Gastrocnemius medialis (tissue), 4 donors: ENCODE measurements at regions of chr20 and their contacts with region 1.

Region 1: DNA sequence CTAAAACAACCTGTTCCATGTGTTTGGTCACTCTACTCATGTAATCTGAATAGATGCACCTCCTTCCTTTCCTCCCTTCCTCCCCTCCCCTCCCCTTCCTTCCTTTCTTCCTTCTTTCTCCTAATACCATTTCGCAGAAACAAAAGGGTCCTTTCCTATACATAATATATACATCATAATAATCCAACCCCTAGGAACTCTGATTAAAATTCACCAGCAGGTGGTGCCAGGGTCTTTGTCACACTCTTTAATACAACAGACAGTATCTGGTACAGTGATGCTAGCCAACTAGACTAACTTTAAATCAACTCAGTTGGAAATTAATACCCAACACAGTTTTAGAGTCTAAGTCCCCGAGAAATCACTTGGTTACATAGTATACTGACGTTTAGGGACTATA is 181.2 kb upstream of the SHLD1 start:
- DNase-seq: no peak
- ATAC-seq: peak in 1 of 2 donors; percentile 61
- H3K4me3 ChIP-seq: no peak overlapping the region
- H3K27ac ChIP-seq: no peak overlapping the region
- H3K4me1 ChIP-seq: no peaks in the 10 kb centered on the region
- H3K27me3 ChIP-seq: no peaks in the 10 kb centered on the region
- CTCF ChIP-seq: peak; percentile 26 to 56 (median 34)
- POLR2A ChIP-seq: no peak

Region 2: DNA sequence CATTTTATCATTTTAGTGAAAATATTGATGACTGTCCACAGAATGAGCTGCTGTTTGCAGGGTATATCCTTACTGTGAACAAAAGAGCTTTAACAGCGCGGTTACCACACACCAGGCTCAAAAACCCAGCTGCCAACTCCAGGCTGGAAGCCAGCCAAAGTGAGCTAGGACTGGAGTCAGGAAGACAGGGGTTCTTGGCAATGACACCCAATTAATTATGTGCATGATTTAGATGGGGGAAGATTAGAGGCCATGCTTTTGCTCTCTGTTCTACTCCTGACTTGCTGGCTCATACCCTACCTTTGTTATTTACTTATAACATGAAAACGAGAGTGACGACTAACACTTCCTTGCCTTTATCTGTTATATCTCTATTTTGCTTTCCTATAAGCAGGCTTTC is 52.3 kb after region 1 on chr20:
- in situ Hi-C with region 1: no loop called
- intact Hi-C with region 1: no loop called
- DNase-seq: no peak
- ATAC-seq: no peak
- H3K4me3 ChIP-seq: no peak overlapping the region
- H3K27ac ChIP-seq: no peak overlapping the region
- H3K4me1 ChIP-seq: no peaks in the 10 kb centered on the region
- H3K27me3 ChIP-seq: no peaks in the 10 kb centered on the region
- CTCF ChIP-seq: no peak
- POLR2A ChIP-seq: no peak

Region 3: DNA sequence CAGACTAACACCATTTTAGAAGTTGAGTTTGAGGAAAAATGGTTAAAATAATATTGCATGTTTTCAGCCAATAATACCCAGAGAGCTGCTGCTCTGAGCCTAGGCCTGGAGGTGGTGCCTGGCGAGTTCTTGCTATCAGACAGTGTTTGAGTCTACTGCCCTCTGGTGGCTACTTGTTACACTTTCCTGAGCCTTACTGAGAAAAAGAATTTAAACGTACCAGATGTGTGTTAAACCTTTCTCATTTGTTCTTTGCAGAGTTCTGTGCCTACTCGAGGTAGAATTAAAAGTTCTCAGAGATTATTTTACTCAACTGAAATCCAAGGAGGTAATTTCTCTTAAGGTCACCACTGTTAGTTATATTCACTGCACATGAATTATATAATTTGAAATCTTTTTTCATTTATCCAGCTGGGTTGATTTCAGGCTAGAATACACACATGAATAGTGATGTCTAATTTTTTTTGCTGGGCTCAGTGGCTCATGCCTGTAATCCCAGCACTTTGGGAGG is 219.4 kb after region 1 on chr20:
- in situ Hi-C with region 1: loop called in 3 of 4 experiments (anchors 5 to 25 kb)
- intact Hi-C with region 1: no loop called
- DNase-seq: peak; percentile 74 to 75
- ATAC-seq: peak; percentile 76 to 84
- H3K4me3 ChIP-seq: no peak overlapping the region
- H3K27ac ChIP-seq: no peak overlapping the region
- H3K4me1 ChIP-seq: peaks cover 16 to 24% of the 10 kb centered on the region in 2 donors
- H3K27me3 ChIP-seq: no peaks in the 10 kb centered on the region
- CTCF ChIP-seq: peak; percentile 86 to 93 (median 89)
- POLR2A ChIP-seq: no peak

Region 4: DNA sequence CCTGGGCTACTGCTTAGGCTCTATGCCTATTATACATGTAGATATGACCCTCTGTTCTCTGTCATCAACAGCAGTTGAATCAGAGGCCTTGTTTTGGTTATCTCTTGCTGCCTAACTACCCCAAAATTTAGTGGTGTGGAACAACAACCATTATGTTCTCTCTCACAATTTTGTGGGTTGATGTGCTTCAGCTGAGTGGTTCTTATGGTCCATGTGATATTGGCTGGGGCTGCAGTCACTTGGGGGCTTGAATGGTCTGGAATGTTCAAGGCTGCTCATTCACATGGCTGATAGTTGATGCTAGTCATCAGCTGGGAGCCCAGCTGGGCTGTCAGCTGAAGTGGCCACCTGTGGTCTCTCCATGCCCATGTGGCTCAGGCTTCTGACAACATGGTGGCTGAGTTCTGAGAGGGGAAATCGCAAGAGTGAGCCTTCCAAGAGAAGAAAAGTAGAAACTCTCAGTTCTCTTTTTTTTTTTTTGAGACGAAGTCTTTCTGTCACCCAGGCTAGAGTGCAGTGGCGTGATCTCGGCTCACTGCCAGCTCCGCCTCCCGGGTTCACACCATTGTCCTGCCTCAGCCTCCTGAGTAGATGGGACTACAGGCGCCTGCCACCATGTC is 228.9 kb after region 1 on chr20:
- in situ Hi-C with region 1: loop called in 3 of 4 experiments (anchors 5 to 25 kb)
- intact Hi-C with region 1: no loop called
- DNase-seq: no peak
- ATAC-seq: no peak
- H3K4me3 ChIP-seq: no peak overlapping the region
- H3K27ac ChIP-seq: no peak overlapping the region
- H3K4me1 ChIP-seq: no peaks in the 10 kb centered on the region
- H3K27me3 ChIP-seq: no peaks in the 10 kb centered on the region
- CTCF ChIP-seq: no peak
- POLR2A ChIP-seq: no peak